Endothelial cell of umbilical vein (primary cell): ENCODE measurements at regions of chr19 and their contacts with region 1.

Region 1: GRCh38 chr19:9768175-9769112 is at the start of gene ZNF846:
- DNase-seq: peak; percentile 93
- H3K4me3 ChIP-seq: peak within 1 kb of the TSS; percentile 42 to 85 (median 83)
- H3K27ac ChIP-seq: peak within 1 kb of the TSS; percentile 85
- H3K4me1 ChIP-seq: peaks cover 7% of the 10 kb centered on the region
- H3K27me3 ChIP-seq: no peaks in the 10 kb centered on the region
- CTCF ChIP-seq: no peak
- POLR2A ChIP-seq: peak; percentile 72
- total RNA-seq, gene ZNF846: 6.9 and 8.3 TPM in 2 replicates

Region 2: GRCh38 chr19:9658769-9659168 is 109.7 kb before region 1 on chr19:
- CTCF ChIA-PET with region 1: no interaction called
- POLR2A ChIA-PET with region 1: no interaction called
- dilution Hi-C with region 1: no loop called
- intact Hi-C with region 1: no loop called
- DNase-seq: no peak
- H3K4me3 ChIP-seq: no peak overlapping the region
- H3K27ac ChIP-seq: no peak overlapping the region
- H3K4me1 ChIP-seq: no peaks in the 10 kb centered on the region
- H3K27me3 ChIP-seq: no peaks in the 10 kb centered on the region
- CTCF ChIP-seq: no peak
- POLR2A ChIP-seq: no peak

Region 3: DNA sequence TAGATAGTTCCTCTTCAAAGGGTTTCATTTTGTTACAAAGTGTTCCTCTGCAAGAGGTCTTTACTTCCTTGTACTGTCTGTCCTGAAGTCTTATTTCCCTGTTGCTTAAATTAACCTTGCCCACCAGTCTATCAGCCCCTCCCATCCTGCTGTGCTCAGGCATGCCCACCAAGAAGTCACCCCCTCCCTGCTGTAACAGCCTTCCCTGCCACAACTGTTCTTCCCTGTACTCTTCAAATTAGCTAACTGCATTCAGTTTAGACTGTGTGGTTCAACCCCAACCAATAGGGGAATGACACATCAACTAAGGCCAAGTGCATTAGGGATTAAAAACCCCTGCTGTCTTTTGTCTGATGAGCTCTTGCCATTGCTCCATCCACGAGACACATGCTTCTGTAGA is 59.1 kb before region 1 on chr19:
- CTCF ChIA-PET with region 1: no interaction called
- POLR2A ChIA-PET with region 1: no interaction called
- dilution Hi-C with region 1: no loop called
- intact Hi-C with region 1: no loop called
- DNase-seq: no peak
- H3K4me3 ChIP-seq: no peak overlapping the region
- H3K27ac ChIP-seq: no peak overlapping the region
- H3K4me1 ChIP-seq: no peaks in the 10 kb centered on the region
- H3K27me3 ChIP-seq: no peaks in the 10 kb centered on the region
- CTCF ChIP-seq: no peak
- POLR2A ChIP-seq: no peak

Region 4: DNA sequence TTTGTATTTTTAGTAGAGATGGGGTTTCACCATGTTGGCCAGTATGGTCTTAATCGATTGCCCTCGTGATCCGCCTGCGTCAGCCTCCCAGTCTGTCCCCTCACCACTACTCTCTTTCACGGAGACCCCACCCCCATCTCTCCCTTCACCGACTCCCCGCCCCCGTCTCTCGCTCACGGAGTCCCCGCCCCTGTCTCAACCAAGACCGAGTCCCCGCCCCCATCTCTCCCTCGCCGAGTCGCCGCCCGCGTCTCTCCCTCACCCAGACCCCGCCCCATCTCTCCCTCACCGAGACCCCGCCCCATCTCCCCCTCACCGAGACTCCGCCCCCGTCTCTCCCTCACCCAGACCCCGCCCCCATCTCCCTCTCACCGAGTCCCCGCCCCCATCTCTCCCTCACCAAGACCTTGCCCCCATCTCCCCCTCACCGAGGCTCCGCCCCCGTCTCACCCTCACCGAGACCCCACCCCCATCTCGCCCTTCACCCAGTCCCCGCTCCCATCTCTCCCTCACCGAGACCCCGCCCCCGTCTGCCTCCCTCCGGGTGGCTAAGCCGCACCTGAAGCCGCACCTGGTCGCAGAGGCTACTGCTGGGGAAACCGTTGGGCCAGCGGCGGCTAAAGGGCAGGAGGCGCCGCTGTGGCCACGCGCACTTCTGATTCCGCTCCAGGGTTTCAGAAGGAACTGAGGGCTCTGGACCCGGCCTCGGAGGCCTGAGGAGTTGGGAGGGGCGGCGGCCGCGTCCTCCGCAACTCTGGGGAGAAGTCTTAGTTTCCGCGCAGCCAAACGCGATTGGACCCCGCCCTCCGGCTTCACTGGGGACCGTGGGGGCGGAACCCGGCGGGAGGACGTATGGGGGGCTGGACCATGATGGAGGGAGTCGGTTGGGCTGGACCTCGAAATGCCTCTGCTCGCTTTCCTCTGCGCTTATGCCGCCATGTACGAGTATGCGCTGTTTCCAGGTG is 17.2 kb after region 1 on chr19:
- CTCF ChIA-PET with region 1: interaction called, 3 read pairs
- POLR2A ChIA-PET with region 1: no interaction called
- dilution Hi-C with region 1: no loop called
- intact Hi-C with region 1: loop called (anchors 1 kb)
- DNase-seq: peak; percentile 92
- H3K4me3 ChIP-seq: peak overlapping the region; percentile 77 to 93 (median 78)
- H3K27ac ChIP-seq: peak overlapping the region; percentile 54
- H3K4me1 ChIP-seq: peaks cover 4% of the 10 kb centered on the region
- H3K27me3 ChIP-seq: no peaks in the 10 kb centered on the region
- CTCF ChIP-seq: no peak
- POLR2A ChIP-seq: peak; percentile 54

Region 5: GRCh38 chr19:9847087-9847671 is 78.7 kb after region 1 on chr19:
- CTCF ChIA-PET with region 1: no interaction called
- POLR2A ChIA-PET with region 1: no interaction called
- dilution Hi-C with region 1: no loop called
- intact Hi-C with region 1: no loop called
- DNase-seq: peak; percentile 60
- H3K4me3 ChIP-seq: no peak overlapping the region
- H3K27ac ChIP-seq: no peak overlapping the region
- H3K4me1 ChIP-seq: no peaks in the 10 kb centered on the region
- H3K27me3 ChIP-seq: no peaks in the 10 kb centered on the region
- CTCF ChIP-seq: peak; percentile 67
- POLR2A ChIP-seq: no peak